HEK293 (cell line): ENCODE measurements at regions of chr11 and their contacts with region 1.

Region 1: DNA sequence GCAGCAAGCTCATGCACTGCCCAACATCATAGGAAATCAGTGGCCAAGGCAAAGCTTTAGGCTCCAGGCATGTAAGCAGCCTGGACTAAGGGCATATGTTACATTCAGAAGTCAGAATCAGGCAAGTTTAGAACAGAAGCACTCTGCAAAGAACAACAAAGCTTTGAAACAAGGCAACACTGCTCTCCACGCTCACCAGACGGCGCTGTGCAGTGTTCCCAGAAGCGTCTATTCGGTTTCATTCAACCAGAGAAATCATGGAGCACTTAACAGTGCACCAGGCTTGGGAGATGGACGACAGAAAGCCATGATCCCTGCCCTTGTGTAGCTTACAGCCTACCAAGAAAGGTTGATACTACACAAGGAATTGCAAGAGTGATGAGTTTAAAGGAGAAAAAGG is 555.8 kb downstream of the BUD13 start:
- H3K4me3 ChIP-seq: no peak overlapping the region
- H3K27ac ChIP-seq: no peak overlapping the region
- H3K4me1 ChIP-seq: no peaks in the 10 kb centered on the region
- CTCF ChIP-seq: peak; percentile 54

Region 2: DNA sequence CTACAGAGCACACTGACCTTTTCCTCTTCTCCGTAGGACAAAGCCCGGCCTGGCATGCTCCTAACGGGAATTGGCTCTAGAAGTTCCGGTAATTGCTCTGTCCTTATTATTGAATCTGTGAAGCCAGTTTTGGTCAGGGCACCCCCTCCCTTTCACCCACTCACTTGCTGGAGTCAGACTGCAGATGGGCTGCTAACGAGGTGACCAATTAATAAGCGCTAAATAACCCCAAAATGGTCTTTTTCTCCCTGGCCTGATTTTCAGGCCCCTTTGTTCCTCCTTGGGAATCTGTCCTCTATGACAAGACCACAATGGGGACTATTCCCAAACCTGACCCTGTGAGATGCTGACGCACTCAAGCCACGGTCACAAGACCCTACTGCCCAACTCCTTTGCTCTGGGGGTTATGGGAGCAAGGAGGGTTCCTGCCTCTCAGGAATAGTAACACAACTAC is 102.8 kb before region 1 on chr11:
- CTCF ChIA-PET with region 1: no interaction called
- POLR2A ChIA-PET with region 1: no interaction called
- H3K4me3 ChIP-seq: no peak overlapping the region
- H3K27ac ChIP-seq: no peak overlapping the region
- H3K4me1 ChIP-seq: no peaks in the 10 kb centered on the region
- CTCF ChIP-seq: no peak

Region 3: DNA sequence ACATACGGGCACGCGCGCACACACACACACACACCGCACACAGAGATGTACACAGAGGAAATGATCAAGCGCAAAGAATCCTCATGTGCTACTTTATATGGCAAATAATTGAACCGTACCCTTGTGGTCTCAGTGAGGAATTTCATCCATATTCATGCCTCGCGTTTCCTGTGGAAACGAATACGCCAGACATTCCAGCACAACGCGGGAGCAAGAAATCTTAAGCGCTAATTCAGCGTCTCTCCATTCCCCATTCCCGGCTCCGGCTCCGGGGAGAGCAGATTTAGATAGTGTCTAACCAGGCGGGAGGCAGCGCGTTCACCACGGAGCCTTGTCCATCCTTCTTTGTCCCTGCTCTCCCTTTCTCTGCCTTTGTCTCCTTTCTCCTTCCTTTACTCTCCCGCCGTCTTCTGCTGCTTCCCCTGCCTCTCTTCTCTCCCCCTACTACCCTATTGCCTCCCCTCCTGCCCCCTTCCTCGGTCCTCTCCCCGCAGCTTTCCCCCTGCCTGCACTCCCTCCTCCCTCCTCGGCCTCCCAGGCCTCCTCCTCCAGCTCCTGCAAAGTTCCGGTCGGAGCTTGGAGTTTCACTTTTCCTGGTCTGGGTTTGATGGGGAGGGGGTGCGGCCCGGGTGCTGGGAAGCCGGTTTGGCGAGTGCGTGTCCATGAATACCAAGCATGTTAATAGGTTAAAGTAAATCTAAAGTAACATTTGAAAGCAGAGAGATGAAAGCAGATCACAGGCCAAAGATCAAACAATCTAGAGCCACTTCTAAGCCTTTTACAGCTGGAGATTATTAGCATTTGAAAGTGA is 23.5 kb before region 1 on chr11:
- CTCF ChIA-PET with region 1: interaction called, 39 read pairs
- POLR2A ChIA-PET with region 1: no interaction called
- H3K4me3 ChIP-seq: peak overlapping the region; percentile 40
- H3K27ac ChIP-seq: no peak overlapping the region
- H3K4me1 ChIP-seq: no peaks in the 10 kb centered on the region
- CTCF ChIP-seq: no peak

Region 4: DNA sequence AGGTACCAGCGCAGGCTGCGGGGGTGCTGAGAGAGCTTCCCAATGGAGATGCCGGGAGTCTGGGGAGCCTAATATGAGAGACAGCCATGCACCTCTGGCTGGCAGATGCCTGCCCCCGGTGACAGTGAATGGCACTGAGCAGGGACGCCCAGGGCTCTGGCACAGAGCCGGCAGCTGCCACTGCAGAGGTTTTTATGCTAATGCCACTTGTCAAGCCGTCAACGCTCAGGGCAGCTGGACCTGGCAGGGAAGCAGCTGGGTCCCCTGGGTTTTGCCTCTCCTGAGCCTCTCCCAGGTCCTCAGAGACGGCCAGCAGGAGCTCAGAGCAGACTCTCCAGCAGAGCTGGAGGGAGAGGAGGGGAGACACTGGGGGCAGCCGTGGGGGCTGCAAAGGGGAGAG is 17.8 kb before region 1 on chr11:
- CTCF ChIA-PET with region 1: interaction called, 39 read pairs
- POLR2A ChIA-PET with region 1: no interaction called
- H3K4me3 ChIP-seq: no peak overlapping the region
- H3K27ac ChIP-seq: no peak overlapping the region
- H3K4me1 ChIP-seq: no peaks in the 10 kb centered on the region
- CTCF ChIP-seq: no peak

Region 5: GRCh38 chr11:116232364-116232828 is 15.4 kb after region 1 on chr11:
- CTCF ChIA-PET with region 1: interaction called, 30 read pairs
- POLR2A ChIA-PET with region 1: no interaction called
- H3K4me3 ChIP-seq: no peak overlapping the region
- H3K27ac ChIP-seq: no peak overlapping the region
- H3K4me1 ChIP-seq: peaks cover 5% of the 10 kb centered on the region; the same call in 1 of the 2 replicates
- CTCF ChIP-seq: no peak

Region 6: DNA sequence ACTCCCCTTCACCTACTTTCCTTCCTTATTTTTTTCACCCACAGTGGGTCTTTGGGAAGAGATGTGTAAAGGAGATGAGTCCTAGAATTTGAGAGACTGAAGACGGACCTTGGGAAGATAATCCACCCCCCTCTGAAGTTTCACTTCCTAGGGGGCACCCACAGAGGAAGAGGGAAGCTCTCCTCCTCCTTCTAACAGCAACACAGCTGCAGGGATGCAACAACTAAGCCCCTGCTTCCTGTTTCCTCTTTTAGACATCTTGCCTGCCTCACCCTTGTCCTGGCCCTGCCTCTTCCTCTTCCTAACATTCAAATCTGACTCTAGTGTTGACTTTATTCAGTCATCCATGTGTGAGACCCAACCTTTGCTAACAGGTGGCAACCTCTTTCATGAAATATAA is 131.2 kb after region 1 on chr11:
- CTCF ChIA-PET with region 1: no interaction called
- POLR2A ChIA-PET with region 1: no interaction called
- H3K4me3 ChIP-seq: no peak overlapping the region
- H3K27ac ChIP-seq: no peak overlapping the region
- H3K4me1 ChIP-seq: no peaks in the 10 kb centered on the region
- CTCF ChIP-seq: no peak

Region 7: DNA sequence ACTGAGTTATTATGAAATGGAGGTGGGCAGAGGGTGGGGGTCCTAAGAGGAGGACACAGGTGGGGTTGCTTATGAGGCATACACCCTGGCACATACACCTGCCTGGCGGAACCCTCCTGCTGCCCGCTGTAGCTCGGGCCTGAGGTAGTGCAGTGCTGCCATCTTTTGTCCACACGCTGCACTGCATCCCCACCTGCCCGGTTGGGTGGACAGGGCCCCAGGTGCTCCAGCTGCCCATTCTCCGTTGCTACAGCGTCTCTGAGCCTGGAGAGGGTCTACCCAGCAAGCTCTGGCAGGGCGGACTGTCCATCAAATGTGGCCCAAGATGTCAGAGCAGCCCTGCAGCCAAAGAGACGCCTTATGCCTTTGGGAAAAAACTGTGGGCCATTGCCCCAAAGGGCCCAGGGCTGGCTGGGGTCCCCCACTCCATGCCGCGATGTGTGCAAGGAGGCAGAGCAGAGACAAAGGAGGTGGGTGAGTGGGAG is 424.6 kb after region 1 on chr11:
- CTCF ChIA-PET with region 1: interaction called, 17 read pairs
- POLR2A ChIA-PET with region 1: no interaction called
- H3K4me3 ChIP-seq: no peak overlapping the region
- H3K27ac ChIP-seq: no peak overlapping the region
- H3K4me1 ChIP-seq: no peaks in the 10 kb centered on the region
- CTCF ChIP-seq: peak; percentile 72

Region 8: DNA sequence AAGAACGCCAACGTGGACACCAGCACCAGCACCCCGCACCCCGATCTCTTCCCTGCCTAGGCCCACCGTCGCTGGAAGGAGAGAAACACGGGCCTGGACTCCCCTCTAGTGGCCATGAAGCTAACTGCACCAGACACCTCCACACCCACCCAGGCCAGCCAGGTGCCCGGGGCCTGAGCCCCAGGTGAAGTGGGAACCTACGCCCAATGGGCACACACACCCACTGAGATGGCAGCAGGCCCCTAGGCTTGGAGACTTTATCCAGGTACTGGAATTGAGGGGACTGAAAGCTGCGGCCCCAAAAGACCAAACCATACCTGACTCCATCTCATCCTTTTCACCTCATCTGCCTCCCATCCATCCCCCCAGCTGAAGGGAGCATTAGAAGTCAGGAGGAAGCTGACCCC is 474.8 kb after region 1 on chr11:
- CTCF ChIA-PET with region 1: interaction called, 19 read pairs
- POLR2A ChIA-PET with region 1: no interaction called
- H3K4me3 ChIP-seq: no peak overlapping the region
- H3K27ac ChIP-seq: no peak overlapping the region
- H3K4me1 ChIP-seq: no peaks in the 10 kb centered on the region
- CTCF ChIP-seq: peak; percentile 55; the same call in 1 of the 2 replicates